T-cell (primary cell): ENCODE measurements at regions of chr11 and their contacts with region 1.

Region 1: DNA sequence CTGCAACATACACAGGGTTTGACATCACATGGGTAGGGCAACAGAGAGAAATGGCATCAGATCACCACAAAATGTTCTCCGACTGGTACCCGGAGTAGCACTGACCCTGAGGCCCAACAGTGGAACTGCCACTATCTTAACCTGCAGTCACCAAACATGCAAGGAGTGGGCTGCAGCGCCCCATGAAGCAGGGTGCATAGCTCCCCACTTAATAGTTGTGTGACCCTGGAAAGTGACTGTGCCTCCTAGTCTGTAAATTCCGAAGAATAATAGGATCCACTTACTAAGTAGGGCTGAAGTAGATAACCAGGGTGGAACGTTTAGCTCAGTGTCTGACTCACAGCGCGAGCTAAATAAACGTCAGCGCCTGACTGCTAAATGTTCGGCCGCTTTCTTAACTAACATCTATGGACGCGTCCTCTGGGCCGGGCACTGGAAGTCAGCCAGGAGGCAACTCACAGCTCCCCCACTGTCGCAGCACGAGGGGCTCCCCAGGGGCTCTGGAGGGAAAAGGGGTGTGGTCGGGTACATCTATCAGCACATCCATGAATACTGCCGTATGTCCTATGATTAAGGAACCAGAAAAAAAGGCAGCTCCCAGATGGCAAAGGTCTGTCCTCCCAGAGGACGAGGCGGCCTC is 766 bp downstream of the LTO1 start:
- DNase-seq: peak in 1 of 35 experiments; percentile 11
- ATAC-seq: peak in 1 of 4 experiments; percentile 2
- H3K4me3 ChIP-seq: peak overlapping the region; percentile 91 to 94
- H3K4me3 Mint-ChIP-seq: peak overlapping the region; percentile 92 to 96 (median 95)
- H3K27ac ChIP-seq: peak overlapping the region; percentile 57
- H3K27ac Mint-ChIP-seq: peak overlapping the region; percentile 72 to 85
- H3K4me1 ChIP-seq: peaks cover 8 to 24% of the 10 kb centered on the region in 2 experiments
- H3K4me1 Mint-ChIP-seq: peaks cover 35 to 45% (median 44%) of the 10 kb centered on the region in 3 donors
- H3K27me3 ChIP-seq: no peaks in the 10 kb centered on the region
- H3K27me3 Mint-ChIP-seq: no peaks in the 10 kb centered on the region

Region 2: DNA sequence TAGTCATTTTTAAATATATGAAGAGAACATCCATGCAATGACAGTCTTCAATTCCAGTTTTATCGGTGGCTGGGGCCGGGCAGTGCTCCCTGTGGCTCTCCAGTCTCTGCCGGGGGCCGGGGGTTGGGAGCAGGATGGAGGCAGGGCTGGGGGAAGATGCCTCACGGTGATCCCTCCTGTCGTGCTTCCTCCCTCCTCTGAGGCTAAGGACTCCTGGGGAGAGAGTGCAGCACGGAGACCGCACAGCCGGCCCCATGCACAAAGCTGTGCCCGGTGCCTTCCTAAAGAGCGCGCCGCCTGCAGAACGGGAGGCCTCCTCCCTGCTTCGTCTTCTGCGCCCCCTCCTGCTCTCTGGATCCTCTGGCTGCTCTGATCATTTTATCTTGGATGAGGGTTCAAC is 969.5 kb before region 1 on chr11:
- CTCF ChIA-PET with region 1: interaction called in 1 of 2 experiments, 10 read pairs
- POLR2A ChIA-PET with region 1: no interaction called
- DNase-seq: no peak
- ATAC-seq: no peak
- H3K4me3 ChIP-seq: no peak overlapping the region
- H3K4me3 Mint-ChIP-seq: no peak overlapping the region
- H3K27ac ChIP-seq: no peak overlapping the region
- H3K27ac Mint-ChIP-seq: no peak overlapping the region
- H3K4me1 ChIP-seq: no peaks in the 10 kb centered on the region
- H3K4me1 Mint-ChIP-seq: no peaks in the 10 kb centered on the region
- H3K27me3 ChIP-seq: no peaks in the 10 kb centered on the region
- H3K27me3 Mint-ChIP-seq: peaks cover 5 to 6% of the 10 kb centered on the region in 2 donors